ENCODE measurements at regions of chr2 and their contacts with region 1.

Region 1: DNA sequence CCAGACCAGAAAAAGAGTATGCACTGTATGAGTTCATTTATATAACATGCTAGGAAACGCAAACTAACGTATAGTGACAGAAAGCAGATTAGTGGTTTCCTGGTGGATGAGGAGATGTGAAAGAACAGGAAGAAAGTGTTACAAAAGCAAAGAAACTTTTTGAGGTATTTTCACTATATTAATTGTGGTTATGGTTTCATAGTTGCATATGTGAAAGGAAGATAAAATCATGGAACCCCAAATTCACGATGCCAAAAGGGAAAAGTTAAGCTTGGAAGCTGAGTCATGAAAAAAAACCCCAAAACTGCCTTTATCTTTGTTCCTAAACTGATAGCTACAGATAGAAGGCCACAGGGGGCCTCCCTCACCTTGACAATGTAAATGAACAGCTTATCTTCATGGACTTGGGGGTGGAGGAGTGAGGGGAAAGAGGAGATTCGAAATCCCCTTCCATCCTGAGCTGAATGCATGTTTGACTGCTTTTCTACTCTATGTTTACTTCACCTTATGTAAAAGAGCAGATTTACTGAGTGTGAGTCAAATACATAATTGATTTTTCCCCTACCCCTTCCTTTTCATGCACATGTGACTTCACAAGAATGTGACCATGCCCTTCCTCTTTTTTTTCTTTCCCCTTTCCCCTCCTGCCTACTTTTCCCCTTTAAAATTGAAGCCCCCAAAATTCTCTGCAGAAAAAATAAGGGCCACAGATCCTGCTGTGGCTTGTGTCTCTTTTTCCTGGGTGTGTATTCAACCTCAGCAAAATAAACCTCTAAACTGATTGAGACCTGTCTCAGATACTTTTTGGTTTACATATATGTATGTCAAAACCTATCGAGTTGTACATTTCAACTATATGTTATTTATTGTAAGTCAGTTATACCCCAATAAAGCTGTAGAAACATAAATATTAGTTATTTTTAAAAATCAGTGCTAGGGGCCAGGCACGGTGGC is 100.1 kb upstream of the TLK1 start:
- DNase-seq: no peak
- H3K4me3 ChIP-seq: no peak overlapping the region
- H3K27ac ChIP-seq: no peak overlapping the region
- H3K27me3 ChIP-seq: no peaks in the 10 kb centered on the region
- CTCF ChIP-seq: no peak

Region 2: DNA sequence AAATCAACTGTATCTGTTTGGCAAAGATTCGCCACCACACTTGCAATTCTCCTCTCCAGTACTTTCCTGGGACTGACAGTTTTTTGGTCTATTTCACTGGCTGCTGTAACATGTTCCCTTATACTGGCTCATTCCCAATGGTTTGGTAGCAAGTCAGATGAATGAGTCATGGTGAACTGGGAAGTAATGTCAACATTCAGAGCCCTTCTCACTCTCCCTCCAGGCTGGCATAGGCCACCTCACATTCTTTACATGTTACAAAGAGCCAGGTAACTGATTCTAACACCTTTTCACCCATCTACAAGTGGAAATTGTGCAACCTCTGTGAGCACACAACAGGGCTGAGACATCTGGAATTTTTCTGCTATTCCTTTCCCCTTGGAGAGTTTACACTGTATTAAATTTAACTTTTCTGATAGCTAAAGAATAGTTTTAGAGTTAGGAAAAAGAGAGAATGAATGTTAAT is 11.3 kb after region 1 on chr2:
- CTCF ChIA-PET with region 1: no interaction called
- POLR2A ChIA-PET with region 1: no interaction called
- DNase-seq: peak; percentile 68
- H3K4me3 ChIP-seq: no peak overlapping the region
- H3K27ac ChIP-seq: no peak overlapping the region
- H3K27me3 ChIP-seq: peaks cover 4% of the 10 kb centered on the region
- CTCF ChIP-seq: no peak

Region 3: GRCh38 chr2:171289991-171290390 is 29.2 kb after region 1 on chr2:
- CTCF ChIA-PET with region 1: no interaction called
- POLR2A ChIA-PET with region 1: interaction called, 11 read pairs
- DNase-seq: no peak
- H3K4me3 ChIP-seq: no peak overlapping the region
- H3K27ac ChIP-seq: peak overlapping the region; percentile 77
- H3K27me3 ChIP-seq: no peaks in the 10 kb centered on the region
- CTCF ChIP-seq: no peak

Region 4: GRCh38 chr2:171595896-171596295 is 335.1 kb after region 1 on chr2:
- CTCF ChIA-PET with region 1: no interaction called
- POLR2A ChIA-PET with region 1: no interaction called
- DNase-seq: peak; percentile 77
- H3K4me3 ChIP-seq: no peak overlapping the region
- H3K27ac ChIP-seq: peak overlapping the region; percentile 3
- H3K27me3 ChIP-seq: no peaks in the 10 kb centered on the region
- CTCF ChIP-seq: no peak